Activated CD4-positive, alpha-beta T cell treated with anti-CD3 and anti-CD28 coated beads for 36 hours (primary cell): ENCODE measurements at regions of chr12 and their contacts with region 1.

Region 1: DNA sequence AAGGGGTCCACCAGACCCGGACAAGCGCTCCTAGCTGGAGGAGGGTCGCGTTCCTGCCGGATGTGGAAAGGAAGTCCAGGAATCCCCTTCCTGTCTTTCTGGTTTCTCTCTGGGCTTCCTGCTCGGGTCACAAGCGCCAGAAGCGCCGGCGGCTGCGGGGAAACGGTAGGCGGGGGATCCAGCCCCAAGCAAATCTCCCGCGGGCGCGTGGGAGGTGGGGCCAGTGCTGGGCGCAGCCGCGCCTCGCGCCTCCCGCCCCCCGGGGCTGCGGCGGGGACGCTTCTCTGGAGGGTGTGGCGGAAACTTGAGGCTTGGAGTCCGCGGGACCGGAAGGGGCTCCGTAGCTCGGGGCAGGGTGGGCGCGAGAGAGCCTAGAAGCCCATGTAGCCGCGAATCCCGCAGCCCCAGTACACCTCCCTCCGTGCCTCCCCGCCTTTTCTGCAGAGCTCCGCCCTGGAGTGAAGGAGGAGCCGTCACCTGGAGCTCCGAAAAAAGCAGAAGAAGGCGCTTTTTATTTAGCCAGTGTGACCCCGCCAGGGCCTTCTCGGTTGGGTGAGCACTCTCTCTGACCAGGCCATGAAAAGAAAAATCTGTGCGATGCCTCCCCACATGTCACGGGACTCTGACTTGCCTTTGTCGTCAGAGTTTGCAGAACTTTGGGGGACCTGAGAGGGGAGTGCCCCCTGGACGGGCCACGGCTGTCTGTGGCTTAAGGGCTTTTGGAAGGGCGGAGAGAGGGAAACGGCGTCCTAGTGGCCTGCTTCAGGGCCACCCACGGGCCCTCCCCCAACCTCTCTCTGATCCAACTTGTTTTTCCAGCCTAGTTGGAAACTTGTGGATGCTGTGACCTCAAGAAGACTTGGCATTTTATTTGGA is 21.4 kb upstream of the CLEC2D start:
- DNase-seq: peak; percentile 96
- ATAC-seq: peak; percentile 72
- H3K4me3 Mint-ChIP-seq: peak overlapping the region; percentile 100
- H3K27ac Mint-ChIP-seq: peak overlapping the region; percentile 100
- H3K4me1 Mint-ChIP-seq: peaks cover 58% of the 10 kb centered on the region
- H3K27me3 Mint-ChIP-seq: no peaks in the 10 kb centered on the region

Region 2: GRCh38 chr12:9449181-9449580 is 198.9 kb before region 1 on chr12:
- CTCF ChIA-PET with region 1: no interaction called
- POLR2A ChIA-PET with region 1: interaction called, 3 read pairs
- intact Hi-C with region 1: loop called in 1 of 2 experiments (anchors 5 kb)
- DNase-seq: no peak
- ATAC-seq: no peak
- H3K4me3 Mint-ChIP-seq: peak overlapping the region; percentile 98
- H3K27ac Mint-ChIP-seq: peak overlapping the region; percentile 97
- H3K4me1 Mint-ChIP-seq: peaks cover 17% of the 10 kb centered on the region
- H3K27me3 Mint-ChIP-seq: no peaks in the 10 kb centered on the region

Region 3: DNA sequence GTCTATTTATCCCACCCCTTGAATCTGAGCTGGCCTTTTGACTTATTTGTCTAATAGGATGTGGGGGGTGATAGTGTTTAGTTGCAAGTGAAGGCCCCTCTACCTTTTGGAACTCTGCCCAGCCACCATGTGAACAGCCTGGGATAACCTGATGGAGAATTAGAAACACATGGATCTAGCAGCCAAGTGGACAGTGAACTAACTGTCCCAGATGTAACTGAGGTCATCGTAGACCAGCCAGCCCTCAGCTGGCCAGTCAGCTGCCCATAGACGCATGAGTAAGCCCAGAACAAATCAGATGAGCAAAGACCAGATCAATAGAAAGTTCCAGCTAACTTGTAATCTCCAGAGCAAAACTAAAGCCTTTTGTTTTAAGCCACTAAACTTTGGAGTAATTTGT is 59.3 kb before region 1 on chr12:
- CTCF ChIA-PET with region 1: no interaction called
- POLR2A ChIA-PET with region 1: no interaction called
- intact Hi-C with region 1: no loop called
- DNase-seq: no peak
- ATAC-seq: no peak
- H3K4me3 Mint-ChIP-seq: no peak overlapping the region
- H3K27ac Mint-ChIP-seq: no peak overlapping the region
- H3K4me1 Mint-ChIP-seq: no peaks in the 10 kb centered on the region
- H3K27me3 Mint-ChIP-seq: no peaks in the 10 kb centered on the region

Region 4: GRCh38 chr12:9662500-9662899 is 14.4 kb after region 1 on chr12:
- CTCF ChIA-PET with region 1: interaction called, 124 read pairs
- POLR2A ChIA-PET with region 1: interaction called, 190 read pairs
- intact Hi-C with region 1: loop called in 1 of 2 experiments (anchors 1 kb)
- DNase-seq: no peak
- ATAC-seq: peak; percentile 7
- H3K4me3 Mint-ChIP-seq: no peak overlapping the region
- H3K27ac Mint-ChIP-seq: peak overlapping the region; percentile 55
- H3K4me1 Mint-ChIP-seq: peaks cover 93% of the 10 kb centered on the region
- H3K27me3 Mint-ChIP-seq: no peaks in the 10 kb centered on the region

Region 5: DNA sequence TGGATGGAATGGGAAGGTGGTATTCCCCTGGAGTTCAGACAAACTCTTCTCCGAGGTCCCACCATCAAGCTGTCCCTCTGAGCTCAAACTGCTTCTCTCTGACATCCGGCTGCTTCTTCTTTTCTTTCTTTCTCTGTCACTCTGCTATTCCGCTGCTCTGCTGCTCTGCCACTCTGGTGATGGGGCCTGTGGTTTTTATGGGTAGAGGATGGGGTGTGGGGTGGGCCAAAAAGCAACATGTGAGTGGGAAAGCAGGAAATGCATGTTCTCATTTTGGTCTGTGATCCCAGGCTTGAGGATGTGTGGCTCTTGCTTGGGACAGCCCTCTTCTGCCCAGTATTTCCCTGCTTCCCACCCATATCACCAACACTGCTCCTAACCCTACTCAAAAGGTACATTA is 54.2 kb after region 1 on chr12:
- CTCF ChIA-PET with region 1: interaction called, 4 read pairs
- POLR2A ChIA-PET with region 1: interaction called, 7 read pairs
- intact Hi-C with region 1: loop called in 1 of 2 experiments (anchors 1 kb)
- DNase-seq: peak; percentile 71
- ATAC-seq: peak; percentile 53
- H3K4me3 Mint-ChIP-seq: peak overlapping the region; percentile 19
- H3K27ac Mint-ChIP-seq: peak overlapping the region; percentile 89
- H3K4me1 Mint-ChIP-seq: peaks cover 75% of the 10 kb centered on the region
- H3K27me3 Mint-ChIP-seq: no peaks in the 10 kb centered on the region

Region 6: GRCh38 chr12:9750276-9751203 is 102.5 kb after region 1 on chr12:
- CTCF ChIA-PET with region 1: interaction called, 6 read pairs
- POLR2A ChIA-PET with region 1: interaction called, 6 read pairs
- intact Hi-C with region 1: loop called in 1 of 2 experiments (anchors 1 kb)
- DNase-seq: peak; percentile 72
- ATAC-seq: peak; percentile 62
- H3K4me3 Mint-ChIP-seq: peak overlapping the region; percentile 53
- H3K27ac Mint-ChIP-seq: peak overlapping the region; percentile 51
- H3K4me1 Mint-ChIP-seq: peaks cover 46% of the 10 kb centered on the region
- H3K27me3 Mint-ChIP-seq: no peaks in the 10 kb centered on the region

Region 7: GRCh38 chr12:9797722-9798619 is 149.9 kb after region 1 on chr12:
- CTCF ChIA-PET with region 1: interaction called, 4 read pairs
- POLR2A ChIA-PET with region 1: interaction called, 15 read pairs
- intact Hi-C with region 1: loop called (anchors 1 to 5 kb)
- DNase-seq: peak; percentile 81
- ATAC-seq: peak; percentile 84
- H3K4me3 Mint-ChIP-seq: peak overlapping the region; percentile 72
- H3K27ac Mint-ChIP-seq: peak overlapping the region; percentile 92
- H3K4me1 Mint-ChIP-seq: peaks cover 42% of the 10 kb centered on the region
- H3K27me3 Mint-ChIP-seq: no peaks in the 10 kb centered on the region